ENCODE measurements at regions of chr1 and their contacts with region 1.

Region 1: DNA sequence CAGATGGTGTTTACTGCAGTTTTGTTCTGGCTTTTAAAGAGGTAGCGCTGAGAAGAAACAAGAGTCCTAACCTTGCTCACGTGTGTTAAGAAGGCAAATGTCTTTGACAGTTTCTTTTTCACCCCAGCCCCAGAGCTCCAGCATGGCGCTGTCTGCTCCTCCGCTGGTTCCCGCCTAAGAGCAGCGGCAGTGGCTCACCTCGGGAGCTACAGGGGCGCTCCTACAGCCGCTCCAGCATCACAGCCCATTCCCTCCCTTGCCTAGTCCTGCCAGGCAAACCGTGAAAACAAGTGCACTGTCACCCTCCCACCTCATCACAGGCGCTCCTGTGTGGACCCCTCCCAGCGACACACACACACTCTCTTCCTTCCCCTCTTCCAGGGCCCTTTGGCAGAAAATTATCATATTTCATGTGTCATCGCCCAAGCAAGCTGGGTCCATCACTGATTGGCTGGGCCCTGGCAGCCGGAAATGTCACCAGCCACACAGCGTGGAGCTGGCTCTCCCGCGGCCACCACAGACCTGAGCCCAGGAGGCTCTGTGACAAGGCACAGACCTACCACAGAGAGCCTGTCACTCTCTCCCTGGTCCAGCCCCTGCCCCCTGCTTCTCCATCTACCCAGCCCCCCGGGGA is 1.2 kb upstream of the HIVEP3 start:
- DNase-seq: no peak
- H3K4me3 ChIP-seq: peak overlapping the region; percentile 22 to 42 (median 40)
- H3K27ac ChIP-seq: peak overlapping the region; percentile 27
- H3K4me1 ChIP-seq: peaks cover 52% of the 10 kb centered on the region
- H3K27me3 ChIP-seq: no peaks in the 10 kb centered on the region
- CTCF ChIP-seq: no peak

Region 2: DNA sequence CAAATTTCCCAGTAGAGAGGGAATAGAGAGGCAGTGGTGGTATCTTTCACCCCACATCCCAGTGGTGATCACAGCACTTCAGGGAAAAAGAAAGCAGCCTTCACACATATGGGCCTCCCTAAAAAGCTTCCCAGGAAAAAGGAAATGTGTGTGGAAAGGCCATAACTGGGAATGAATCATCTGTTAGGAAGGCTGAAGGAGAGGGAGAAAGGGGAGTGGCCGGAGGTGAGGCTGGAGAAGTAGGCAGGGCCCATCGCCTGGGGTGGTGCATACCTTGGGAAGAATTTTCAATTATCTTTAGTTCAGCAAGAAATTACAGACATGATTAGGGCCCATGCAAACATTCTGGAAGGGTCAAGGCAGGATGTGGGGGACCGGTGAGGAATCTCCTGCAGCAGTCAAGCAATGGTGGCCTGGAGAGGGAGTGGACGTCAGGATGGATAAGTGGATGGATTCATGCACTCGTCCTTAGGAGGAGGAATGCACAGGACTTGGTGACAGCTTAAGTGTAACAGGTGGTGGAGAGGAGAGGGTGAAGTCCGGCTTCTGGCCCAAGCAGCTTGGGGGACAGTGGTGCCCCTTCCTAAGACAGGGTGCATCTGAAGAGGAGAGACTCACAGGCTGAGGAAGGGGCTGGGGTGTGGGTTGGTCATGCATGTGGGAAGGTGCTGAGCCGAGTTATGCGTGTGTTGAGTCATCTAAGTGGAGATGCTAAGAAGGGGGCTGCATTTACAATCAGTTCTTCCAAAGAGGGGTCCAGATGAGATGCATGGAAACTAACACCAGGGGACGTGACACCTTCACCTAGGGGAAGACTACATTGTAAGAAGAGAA is 19.1 kb before region 1 on chr1:
- CTCF ChIA-PET with region 1: no interaction called
- dilution Hi-C with region 1: no loop called
- in situ Hi-C with region 1: no loop called
- intact Hi-C with region 1: loop called (anchors 1 kb)
- DNase-seq: peak; percentile 72
- H3K4me3 ChIP-seq: no peak overlapping the region
- H3K27ac ChIP-seq: peak overlapping the region; percentile 65
- H3K4me1 ChIP-seq: peaks cover 45% of the 10 kb centered on the region
- H3K27me3 ChIP-seq: no peaks in the 10 kb centered on the region
- CTCF ChIP-seq: no peak

Region 3: GRCh38 chr1:41908288-41908895 is 11.5 kb before region 1 on chr1:
- CTCF ChIA-PET with region 1: no interaction called
- dilution Hi-C with region 1: no loop called
- in situ Hi-C with region 1: no loop called
- intact Hi-C with region 1: loop called (anchors 1 kb)
- DNase-seq: no peak
- H3K4me3 ChIP-seq: no peak overlapping the region
- H3K27ac ChIP-seq: no peak overlapping the region
- H3K4me1 ChIP-seq: no peaks in the 10 kb centered on the region
- H3K27me3 ChIP-seq: no peaks in the 10 kb centered on the region
- CTCF ChIP-seq: no peak

Region 4: GRCh38 chr1:42035830-42036604 is 116.1 kb after region 1 on chr1:
- CTCF ChIA-PET with region 1: no interaction called
- dilution Hi-C with region 1: no loop called
- in situ Hi-C with region 1: no loop called
- intact Hi-C with region 1: loop called (anchors 5 kb)
- DNase-seq: peak; percentile 87
- H3K4me3 ChIP-seq: peak overlapping the region; percentile 77 to 93 (median 86)
- H3K27ac ChIP-seq: peak overlapping the region; percentile 57
- H3K4me1 ChIP-seq: peaks cover 19% of the 10 kb centered on the region
- H3K27me3 ChIP-seq: no peaks in the 10 kb centered on the region
- CTCF ChIP-seq: no peak